ENCODE measurements at regions of chr2 and their contacts with region 1.

Region 1: GRCh38 chr2:151657667-151658076 is 76.6 kb downstream of the NEB start:
- DNase-seq: no peak
- H3K4me3 ChIP-seq: no peak overlapping the region
- H3K27ac ChIP-seq: no peak overlapping the region
- H3K4me1 ChIP-seq: no peaks in the 10 kb centered on the region
- H3K27me3 ChIP-seq: no peaks in the 10 kb centered on the region
- CTCF ChIP-seq: no peak

Region 2: DNA sequence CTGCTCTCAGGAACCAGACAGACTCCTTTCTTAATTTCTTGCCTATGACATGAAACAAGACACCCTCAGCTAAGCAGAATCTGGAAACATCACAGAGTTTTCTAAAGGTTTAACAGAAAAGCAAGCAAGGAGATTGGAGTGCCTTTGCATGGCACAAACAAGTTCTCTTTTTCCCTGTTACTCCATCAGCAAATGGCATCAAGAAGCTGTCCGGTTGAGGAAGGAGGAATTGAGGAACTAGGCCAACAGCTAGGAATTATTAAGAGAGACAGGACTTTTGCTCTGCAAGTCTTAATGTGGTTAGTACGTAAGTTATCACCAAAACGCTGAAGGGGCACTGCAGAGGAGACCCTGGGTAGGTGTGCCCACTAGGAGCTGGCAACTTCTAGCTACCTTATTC is 23.4 kb after region 1 on chr2:
- CTCF ChIA-PET with region 1: no interaction called
- POLR2A ChIA-PET with region 1: no interaction called
- intact Hi-C with region 1: loop called (anchors 2 kb)
- DNase-seq: no peak
- H3K4me3 ChIP-seq: no peak overlapping the region
- H3K27ac ChIP-seq: no peak overlapping the region
- H3K4me1 ChIP-seq: no peaks in the 10 kb centered on the region
- H3K27me3 ChIP-seq: no peaks in the 10 kb centered on the region
- CTCF ChIP-seq: no peak

Region 3: DNA sequence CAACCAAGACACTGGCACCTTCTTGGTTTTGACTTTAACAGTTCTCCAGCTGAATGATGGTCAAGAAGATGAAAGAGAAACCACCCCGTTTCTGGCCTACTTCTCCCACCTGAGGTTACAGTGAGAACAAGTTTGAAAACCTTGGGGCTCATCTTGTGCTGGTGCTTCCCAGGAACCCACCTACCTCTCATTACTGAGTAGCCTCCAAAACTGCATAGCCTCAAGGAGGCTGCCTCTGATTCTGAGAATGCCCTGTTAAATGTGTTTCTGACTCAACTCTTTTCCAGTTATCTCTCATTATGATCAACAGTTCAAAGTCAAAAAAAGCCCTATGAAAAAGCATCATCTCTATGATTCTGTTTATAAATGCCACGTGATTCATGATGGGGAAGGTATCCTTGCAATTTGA is 319.3 kb after region 1 on chr2:
- CTCF ChIA-PET with region 1: no interaction called
- POLR2A ChIA-PET with region 1: no interaction called
- intact Hi-C with region 1: no loop called
- DNase-seq: no peak
- H3K4me3 ChIP-seq: no peak overlapping the region
- H3K27ac ChIP-seq: no peak overlapping the region
- H3K4me1 ChIP-seq: no peaks in the 10 kb centered on the region
- H3K27me3 ChIP-seq: peaks cover 48% of the 10 kb centered on the region
- CTCF ChIP-seq: no peak